Dorsolateral prefrontal cortex (tissue), 120 donors: ENCODE measurements at regions of chr6 and their contacts with region 1.

Region 1: DNA sequence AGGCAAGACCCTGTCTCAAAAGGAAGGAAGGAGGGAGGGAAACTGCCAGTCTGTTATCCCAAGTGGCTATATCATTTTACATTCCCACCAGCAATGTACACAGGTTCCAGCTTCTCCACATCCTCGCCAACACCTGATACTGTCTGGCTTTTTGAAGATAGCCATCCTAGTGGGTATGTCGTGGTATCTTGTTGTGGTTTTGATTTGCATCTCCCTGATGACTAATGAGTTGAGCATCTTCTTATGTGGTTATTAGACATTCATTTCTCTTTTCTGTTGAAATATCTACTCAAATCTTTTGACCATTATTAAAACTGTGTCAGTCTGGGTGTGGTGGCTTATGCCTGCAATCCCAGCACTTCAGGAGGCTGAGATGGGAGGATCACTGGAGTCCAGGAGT is 47.9 kb upstream of the ARID1B start:
- DNase-seq: no peak
- H3K4me3 ChIP-seq: no peak overlapping the region
- H3K27ac ChIP-seq: no peak overlapping the region
- H3K27me3 ChIP-seq: no peaks in the 10 kb centered on the region
- CTCF ChIP-seq: no peak

Region 2: DNA sequence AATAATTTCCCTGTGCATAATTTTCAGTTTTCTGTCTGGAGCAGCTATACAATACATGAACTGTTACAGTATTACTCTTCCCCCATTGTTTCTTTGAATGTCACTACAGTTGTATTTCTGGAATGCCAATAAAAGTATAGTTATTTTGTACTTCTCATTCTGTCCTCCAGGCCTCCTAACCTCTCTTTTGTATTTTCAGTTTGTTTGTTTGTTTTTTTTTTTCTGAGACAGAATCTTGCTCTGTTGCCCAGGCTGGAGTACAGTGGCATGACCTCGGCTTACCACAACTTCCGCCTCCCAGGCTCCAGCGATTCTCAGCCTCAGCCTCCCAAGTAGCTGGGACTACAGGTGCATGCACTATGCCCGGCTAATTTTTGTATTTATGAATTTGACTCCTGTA is 31.1 kb after region 1 on chr6:
- intact Hi-C with region 1: loop called in 1 of 2 experiments (anchors 5 kb)
- DNase-seq: no peak
- H3K4me3 ChIP-seq: no peak overlapping the region
- H3K27ac ChIP-seq: no peak overlapping the region
- H3K27me3 ChIP-seq: no peaks in the 10 kb centered on the region
- CTCF ChIP-seq: no peak